MCF 10A (cell line): ENCODE measurements at regions of chr1 and their contacts with region 1.

Region 1: GRCh38 chr1:27959400-27960217 is at the start of gene XKR8:
- DNase-seq: peak; percentile 89
- H3K4me3 Mint-ChIP-seq: peak within 1 kb of the TSS; percentile 79
- H3K27ac Mint-ChIP-seq: peak within 1 kb of the TSS; percentile 93
- H3K4me1 Mint-ChIP-seq: peaks cover 15% of the 10 kb centered on the region
- H3K27me3 Mint-ChIP-seq: no peaks in the 10 kb centered on the region
- CTCF ChIP-seq: peak; percentile 38
- total RNA-seq, gene XKR8: 2.8 and 4.0 TPM in 2 replicates

Region 2: GRCh38 chr1:27970401-27970800 is 10.8 kb after region 1 on chr1:
- CTCF ChIA-PET with region 1: interaction called, 4 read pairs
- POLR2A ChIA-PET with region 1: interaction called, 21 read pairs
- intact Hi-C with region 1: no loop called
- DNase-seq: no peak
- H3K4me3 Mint-ChIP-seq: no peak overlapping the region
- H3K27ac Mint-ChIP-seq: no peak overlapping the region
- H3K4me1 Mint-ChIP-seq: peaks cover 31% of the 10 kb centered on the region
- H3K27me3 Mint-ChIP-seq: no peaks in the 10 kb centered on the region
- CTCF ChIP-seq: no peak

Region 3: DNA sequence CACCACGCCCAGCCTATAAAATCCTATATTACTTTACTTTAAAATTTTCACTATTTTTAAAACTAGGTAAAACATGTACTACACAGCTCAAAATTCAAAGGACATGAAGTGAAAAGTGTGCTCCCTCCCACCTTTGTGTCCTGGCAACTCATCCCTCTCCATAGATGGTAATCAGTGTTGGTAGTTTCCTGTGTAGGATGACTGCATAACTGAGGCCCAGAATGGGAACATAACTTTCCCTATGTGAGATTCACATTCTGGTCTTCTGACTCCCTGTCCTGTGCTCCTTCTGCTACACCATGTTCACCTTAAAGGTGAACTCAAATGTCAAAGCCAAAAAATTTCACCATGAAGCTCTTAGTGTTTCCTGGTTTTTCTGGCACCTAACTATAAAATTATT is 39.4 kb after region 1 on chr1:
- CTCF ChIA-PET with region 1: no interaction called
- POLR2A ChIA-PET with region 1: no interaction called
- intact Hi-C with region 1: no loop called
- DNase-seq: no peak
- H3K4me3 Mint-ChIP-seq: no peak overlapping the region
- H3K27ac Mint-ChIP-seq: no peak overlapping the region
- H3K4me1 Mint-ChIP-seq: no peaks in the 10 kb centered on the region
- H3K27me3 Mint-ChIP-seq: no peaks in the 10 kb centered on the region
- CTCF ChIP-seq: no peak